ENCODE measurements at regions of chr4 and their contacts with region 1.

Region 1: GRCh38 chr4:24557026-24558025 is 27.0 kb downstream of the DHX15 start:
- DNase-seq: no peak
- ATAC-seq: peak; percentile 50
- H3K4me3 Mint-ChIP-seq: peak overlapping the region; percentile 28
- H3K27ac Mint-ChIP-seq: peak overlapping the region; percentile 35
- H3K4me1 Mint-ChIP-seq: peaks cover 55% of the 10 kb centered on the region
- H3K27me3 Mint-ChIP-seq: no peaks in the 10 kb centered on the region
- CTCF ChIP-seq: no peak

Region 2: GRCh38 chr4:23015821-23016220 is 1541.5 kb before region 1 on chr4:
- CTCF ChIA-PET with region 1: no interaction called
- POLR2A ChIA-PET with region 1: no interaction called
- intact Hi-C with region 1: no loop called
- DNase-seq: no peak
- ATAC-seq: no peak
- H3K4me3 Mint-ChIP-seq: no peak overlapping the region
- H3K27ac Mint-ChIP-seq: no peak overlapping the region
- H3K4me1 Mint-ChIP-seq: no peaks in the 10 kb centered on the region
- H3K27me3 Mint-ChIP-seq: no peaks in the 10 kb centered on the region
- CTCF ChIP-seq: no peak

Region 3: DNA sequence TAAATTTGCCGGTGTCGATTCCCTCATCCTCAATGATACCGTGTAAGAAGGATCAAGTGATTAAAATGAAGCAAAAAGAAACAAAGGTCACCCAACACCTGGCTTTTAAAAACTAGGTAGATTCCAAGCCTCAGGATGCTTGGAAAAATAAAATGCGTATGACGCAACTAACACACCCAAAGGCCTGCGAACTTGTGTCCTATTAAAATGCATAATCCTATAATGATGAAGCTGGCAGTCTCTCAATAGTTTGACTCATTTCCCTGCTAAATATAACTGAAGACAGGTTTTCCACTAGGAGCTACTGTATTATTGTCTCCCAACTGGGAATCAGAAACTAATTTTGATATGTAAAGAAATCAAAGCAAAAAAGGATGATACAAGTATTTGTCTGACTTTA is 236.2 kb before region 1 on chr4:
- CTCF ChIA-PET with region 1: no interaction called
- POLR2A ChIA-PET with region 1: no interaction called
- intact Hi-C with region 1: no loop called
- DNase-seq: no peak
- ATAC-seq: no peak
- H3K4me3 Mint-ChIP-seq: no peak overlapping the region
- H3K27ac Mint-ChIP-seq: no peak overlapping the region
- H3K4me1 Mint-ChIP-seq: no peaks in the 10 kb centered on the region
- H3K27me3 Mint-ChIP-seq: no peaks in the 10 kb centered on the region
- CTCF ChIP-seq: no peak

Region 4: DNA sequence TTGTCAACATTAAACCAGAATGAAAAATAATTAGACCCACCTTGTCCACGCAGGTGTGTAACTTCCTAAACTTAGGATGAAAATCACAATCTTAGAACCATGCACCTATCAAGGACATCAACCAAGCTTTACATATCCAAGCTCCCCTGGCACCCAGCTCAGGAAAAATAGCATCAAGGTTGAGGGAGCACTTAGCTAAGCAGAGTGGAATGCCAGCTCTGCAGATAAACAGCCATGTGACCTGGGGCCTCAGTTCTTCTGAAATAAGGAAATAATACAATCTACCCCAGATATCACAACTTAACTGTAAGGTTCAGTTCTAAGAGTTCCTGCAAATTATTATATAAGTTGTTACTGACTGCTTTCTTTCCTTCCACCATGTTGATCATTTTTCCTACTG is 37.7 kb before region 1 on chr4:
- CTCF ChIA-PET with region 1: no interaction called
- POLR2A ChIA-PET with region 1: no interaction called
- intact Hi-C with region 1: loop called (anchors 5 kb)
- DNase-seq: no peak
- ATAC-seq: no peak
- H3K4me3 Mint-ChIP-seq: no peak overlapping the region
- H3K27ac Mint-ChIP-seq: no peak overlapping the region
- H3K4me1 Mint-ChIP-seq: no peaks in the 10 kb centered on the region
- H3K27me3 Mint-ChIP-seq: no peaks in the 10 kb centered on the region
- CTCF ChIP-seq: no peak

Region 5: DNA sequence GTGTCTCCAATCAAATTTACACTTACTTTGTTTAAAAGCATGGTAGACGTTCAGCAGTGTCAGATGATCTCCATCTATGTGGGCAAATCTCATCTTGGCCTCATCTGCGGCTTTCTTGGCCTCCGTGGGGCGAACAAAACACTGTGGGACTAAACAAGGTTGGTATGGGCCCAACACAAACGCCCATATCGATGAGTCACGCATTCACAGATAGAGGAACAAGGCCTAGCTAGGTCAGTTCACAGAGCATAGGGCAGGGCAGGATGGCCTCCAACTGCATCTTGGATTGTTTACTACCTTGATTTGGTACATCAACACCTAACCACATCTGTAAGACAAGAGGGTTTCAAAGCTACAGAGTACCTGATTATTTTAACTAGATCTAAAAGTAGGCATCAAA is 20.3 kb before region 1 on chr4:
- CTCF ChIA-PET with region 1: no interaction called
- POLR2A ChIA-PET with region 1: no interaction called
- intact Hi-C with region 1: loop called (anchors 2 kb)
- DNase-seq: no peak
- ATAC-seq: no peak
- H3K4me3 Mint-ChIP-seq: no peak overlapping the region
- H3K27ac Mint-ChIP-seq: no peak overlapping the region
- H3K4me1 Mint-ChIP-seq: no peaks in the 10 kb centered on the region
- H3K27me3 Mint-ChIP-seq: no peaks in the 10 kb centered on the region
- CTCF ChIP-seq: no peak

Region 6: GRCh38 chr4:24573582-24573981 is 16.3 kb after region 1 on chr4:
- CTCF ChIA-PET with region 1: interaction called, 4 read pairs
- POLR2A ChIA-PET with region 1: interaction called, 6 read pairs
- intact Hi-C with region 1: loop called (anchors 2 kb)
- DNase-seq: no peak
- ATAC-seq: no peak
- H3K4me3 Mint-ChIP-seq: no peak overlapping the region
- H3K27ac Mint-ChIP-seq: no peak overlapping the region
- H3K4me1 Mint-ChIP-seq: peaks cover 71% of the 10 kb centered on the region
- H3K27me3 Mint-ChIP-seq: no peaks in the 10 kb centered on the region
- CTCF ChIP-seq: no peak

Region 7: DNA sequence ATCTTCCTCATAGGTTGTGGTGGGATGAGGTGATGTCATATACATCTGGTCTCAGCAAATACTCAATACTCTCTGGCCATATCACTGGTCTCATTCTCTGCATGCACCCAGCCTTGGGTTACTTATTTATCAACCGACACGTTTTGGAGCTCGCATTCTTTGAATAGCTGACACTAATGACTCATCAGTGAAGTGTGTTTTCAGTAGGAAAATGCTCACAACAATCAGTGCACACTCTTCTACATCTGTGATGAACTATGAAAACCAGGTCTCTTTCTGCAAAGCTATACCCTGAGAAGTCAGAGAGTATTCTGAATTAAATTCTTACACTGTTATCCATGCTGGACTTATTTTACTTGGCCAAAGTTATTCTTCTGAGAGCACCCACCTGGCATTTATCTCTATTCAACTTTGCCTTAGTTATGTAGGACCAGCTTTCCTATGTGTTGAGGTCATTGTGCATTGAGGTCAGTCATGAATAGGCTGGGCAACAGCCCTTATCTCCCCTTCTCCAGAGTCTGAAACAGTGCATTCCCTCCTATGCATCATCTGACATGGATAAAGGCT is 85.7 kb after region 1 on chr4:
- CTCF ChIA-PET with region 1: no interaction called
- POLR2A ChIA-PET with region 1: no interaction called
- intact Hi-C with region 1: no loop called
- DNase-seq: no peak
- ATAC-seq: no peak
- H3K4me3 Mint-ChIP-seq: no peak overlapping the region
- H3K27ac Mint-ChIP-seq: no peak overlapping the region
- H3K4me1 Mint-ChIP-seq: no peaks in the 10 kb centered on the region
- H3K27me3 Mint-ChIP-seq: peaks cover 17% of the 10 kb centered on the region
- CTCF ChIP-seq: no peak